ENCODE measurements at regions of chr7 and their contacts with region 1.

Region 1: DNA sequence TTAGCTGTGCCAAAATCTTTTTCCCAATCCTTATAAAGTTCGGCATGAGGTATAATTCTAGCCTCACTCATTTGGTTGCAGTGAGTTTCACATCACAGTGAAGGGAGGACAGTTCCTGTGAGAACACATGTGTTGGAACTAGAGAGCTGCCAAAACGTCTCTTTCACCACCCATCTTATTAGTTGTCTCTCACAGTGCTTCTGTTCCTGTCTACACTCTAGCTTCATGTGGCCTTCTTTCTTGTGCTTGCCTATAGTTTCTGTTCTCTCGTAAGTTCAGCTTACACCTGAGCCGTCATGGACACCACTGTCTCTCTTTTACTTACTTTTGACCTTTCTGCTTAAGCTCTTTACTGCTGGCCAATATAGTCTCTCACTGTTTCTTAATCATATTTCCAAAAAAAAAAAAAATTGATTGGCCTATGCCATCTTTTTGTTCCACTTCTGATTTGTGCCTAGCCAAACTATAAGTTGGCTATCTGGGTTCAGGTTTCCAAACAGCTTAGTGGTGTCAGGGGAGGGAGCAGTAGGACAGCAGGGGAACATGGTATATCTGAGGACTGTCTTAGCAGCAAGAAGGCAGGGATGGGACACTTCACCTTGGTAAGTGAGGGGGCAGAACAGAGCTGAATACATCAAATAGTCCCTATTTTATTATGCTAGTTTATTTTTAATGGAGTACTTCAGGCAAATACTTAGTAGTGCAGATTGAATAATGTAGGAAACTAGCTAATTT is 38.0 kb downstream of the ZNRF2 start:
- DNase-seq: peak in 17 of 35 experiments; percentile 1 to 65 (median 16)
- ATAC-seq: peak; percentile 83 to 91 (median 86)
- H3K4me3 ChIP-seq: peak overlapping the region in 1 of 2 donors; percentile 37
- H3K4me3 Mint-ChIP-seq: peak overlapping the region; percentile 80 to 82 (median 81)
- H3K27ac ChIP-seq: peak overlapping the region; percentile 91
- H3K27ac Mint-ChIP-seq: peak overlapping the region; percentile 96 to 97
- H3K4me1 ChIP-seq: peaks cover 4 to 20% of the 10 kb centered on the region in 2 experiments
- H3K4me1 Mint-ChIP-seq: peaks cover 79 to 86% (median 81%) of the 10 kb centered on the region in 3 donors
- H3K27me3 ChIP-seq: no peaks in the 10 kb centered on the region
- H3K27me3 Mint-ChIP-seq: no peaks in the 10 kb centered on the region

Region 2: DNA sequence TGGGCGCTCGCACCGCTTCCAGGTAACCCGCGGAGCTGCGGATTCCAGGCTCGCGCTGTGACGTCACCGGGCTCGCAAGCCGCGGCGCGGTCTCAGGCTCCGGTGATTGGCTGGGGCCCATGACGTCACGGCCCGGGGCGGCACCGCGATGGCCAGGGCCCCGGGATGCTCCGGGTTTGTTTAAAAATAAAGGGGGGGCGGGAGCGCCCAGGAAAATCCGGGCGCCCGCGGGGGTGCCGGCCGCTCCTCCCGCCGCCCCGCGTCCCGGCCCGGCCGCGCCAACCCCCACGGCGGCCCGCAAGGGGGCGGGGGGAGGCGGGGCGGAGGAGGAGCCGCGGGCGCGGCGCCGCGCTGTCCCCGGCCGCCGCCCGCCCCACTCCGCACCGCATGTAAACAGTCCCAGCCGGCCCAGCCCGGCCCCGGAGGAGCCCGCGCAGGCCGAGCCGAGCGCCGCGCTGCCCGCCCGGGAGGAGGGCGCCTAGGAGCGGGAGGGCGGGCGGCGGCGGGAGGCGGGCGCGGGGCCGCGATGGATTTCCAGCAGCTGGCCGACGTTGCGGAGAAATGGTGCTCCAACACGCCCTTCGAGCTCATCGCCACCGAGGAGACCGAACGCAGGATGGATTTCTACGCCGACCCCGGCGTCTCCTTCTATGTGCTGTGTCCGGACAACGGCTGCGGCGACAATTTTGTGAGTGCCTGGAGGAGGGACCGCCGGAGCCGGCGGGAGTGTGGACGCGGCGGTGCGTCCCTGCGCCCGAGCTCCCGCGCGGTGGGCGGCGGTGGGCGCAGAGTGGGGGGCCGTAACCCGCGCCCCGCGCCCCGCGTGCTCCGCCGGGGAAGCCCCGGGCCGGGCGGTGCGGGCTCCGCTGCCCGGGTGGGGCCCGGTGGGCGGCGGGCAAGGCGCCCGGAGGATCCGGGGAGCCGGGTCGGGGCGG is 187.6 kb before region 1 on chr7 and contains the start of gene MTURN:
- CTCF ChIA-PET with region 1: no interaction called
- POLR2A ChIA-PET with region 1: interaction called in 1 of 2 experiments, 11 read pairs
- DNase-seq: peak; percentile 64 to 94 (median 83)
- ATAC-seq: peak; percentile 85 to 89 (median 86)
- H3K4me3 ChIP-seq: peak within 1 kb of the TSS; percentile 86 to 92
- H3K4me3 Mint-ChIP-seq: peak within 1 kb of the TSS; percentile 86 to 92 (median 88)
- H3K27ac ChIP-seq: peak within 1 kb of the TSS; percentile 41
- H3K27ac Mint-ChIP-seq: peak within 1 kb of the TSS; percentile 68 to 79
- H3K4me1 ChIP-seq: peaks cover 0 to 19% of the 10 kb centered on the region in 2 experiments
- H3K4me1 Mint-ChIP-seq: peaks cover 11 to 19% (median 17%) of the 10 kb centered on the region in 3 donors
- H3K27me3 ChIP-seq: no peaks in the 10 kb centered on the region
- H3K27me3 Mint-ChIP-seq: peaks cover 2 to 6% of the 10 kb centered on the region in 2 donors
- total RNA-seq, gene MTURN: 17.3 to 26.3 (median 22.8) TPM

Region 3: DNA sequence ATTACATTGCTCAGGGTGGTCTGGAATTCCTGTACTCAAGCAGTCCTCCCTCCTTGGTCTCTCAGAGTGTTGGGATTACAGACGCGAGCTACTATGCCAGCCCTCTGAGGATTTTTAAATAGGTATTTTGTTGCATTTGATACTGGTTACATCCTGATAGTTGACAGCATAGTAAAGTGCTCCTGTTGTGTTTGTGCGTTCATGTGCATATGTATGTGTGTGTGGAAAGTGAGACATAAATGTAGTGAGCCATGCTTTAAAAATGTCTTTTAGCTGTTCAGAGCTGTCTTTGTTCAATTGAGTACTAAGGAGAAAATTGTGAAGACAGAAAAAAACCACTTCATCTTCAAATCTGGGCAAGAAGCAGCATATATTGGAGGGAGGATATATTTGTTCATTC is 10.3 kb before region 1 on chr7:
- CTCF ChIA-PET with region 1: interaction called in 1 of 2 experiments, 11 read pairs
- POLR2A ChIA-PET with region 1: interaction called in 1 of 2 experiments, 9 read pairs
- DNase-seq: no peak
- ATAC-seq: no peak
- H3K4me3 ChIP-seq: no peak overlapping the region
- H3K4me3 Mint-ChIP-seq: no peak overlapping the region
- H3K27ac ChIP-seq: no peak overlapping the region
- H3K27ac Mint-ChIP-seq: peak overlapping the region in 1 of 2 donors; percentile 64
- H3K4me1 ChIP-seq: no peaks in the 10 kb centered on the region
- H3K4me1 Mint-ChIP-seq: peaks cover 44 to 73% (median 71%) of the 10 kb centered on the region in 3 donors
- H3K27me3 ChIP-seq: no peaks in the 10 kb centered on the region
- H3K27me3 Mint-ChIP-seq: no peaks in the 10 kb centered on the region

Region 4: DNA sequence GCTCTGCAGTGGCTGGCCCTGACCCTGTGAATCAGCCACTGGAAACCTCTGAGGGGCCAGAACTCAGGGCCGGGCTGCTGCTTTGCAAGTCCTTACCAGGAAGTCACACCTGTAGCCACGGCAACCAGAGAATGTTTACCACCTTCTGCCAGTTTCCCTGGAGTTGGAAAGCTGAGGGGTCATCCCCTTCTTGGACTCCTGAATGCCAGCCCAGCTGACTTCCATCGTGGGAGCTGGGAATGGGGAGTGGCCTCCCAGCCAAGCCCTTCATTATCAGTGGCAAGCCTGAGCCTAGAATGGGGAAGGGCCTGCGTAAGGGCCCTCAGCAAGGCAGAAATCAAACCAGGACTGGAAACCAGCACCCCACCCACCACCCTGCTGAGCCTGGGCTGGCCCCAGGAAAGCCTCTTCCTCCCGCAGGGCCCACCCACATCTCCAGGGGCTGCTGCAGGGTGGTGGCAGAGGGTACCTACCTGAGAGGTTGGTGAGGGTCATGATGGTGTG is 366.3 kb after region 1 on chr7:
- CTCF ChIA-PET with region 1: no interaction called
- POLR2A ChIA-PET with region 1: no interaction called
- DNase-seq: no peak
- ATAC-seq: no peak
- H3K4me3 ChIP-seq: no peak overlapping the region
- H3K4me3 Mint-ChIP-seq: no peak overlapping the region
- H3K27ac ChIP-seq: no peak overlapping the region
- H3K27ac Mint-ChIP-seq: no peak overlapping the region
- H3K4me1 ChIP-seq: peaks cover 0 to 3% of the 10 kb centered on the region in 2 experiments
- H3K4me1 Mint-ChIP-seq: peaks cover 0 to 2% (median 2%) of the 10 kb centered on the region in 3 donors
- H3K27me3 ChIP-seq: peaks cover 3 to 50% of the 10 kb centered on the region in 2 experiments
- H3K27me3 Mint-ChIP-seq: peaks cover 14 to 18% of the 10 kb centered on the region in 2 donors